H1 (cell line): ENCODE measurements at regions of chr3 and their contacts with region 1.

Region 1: GRCh38 chr3:50221411-50222168 is 14.4 kb upstream of the GNAI2 start:
- DNase-seq: peak in 1 of 2 experiments; percentile 70
- H3K4me3 ChIP-seq: no peak overlapping the region
- H3K27ac ChIP-seq: no peak overlapping the region
- H3K4me1 ChIP-seq: peaks cover 0 to 3% (median 1%) of the 10 kb centered on the region in 4 experiments; a peak in 5 of 7 replicates
- H3K27me3 ChIP-seq: peaks cover 0 to 2% (median 0%) of the 10 kb centered on the region in 4 experiments; a peak in 1 of 7 replicates
- CTCF ChIP-seq: peak in 2 of 3 experiments; percentile 77 to 91; a peak in 3 of 4 replicates
- EP300 ChIP-seq: no peak
- POLR2A ChIP-seq: no peak
- RAD21 ChIP-seq: peak; percentile 74 to 81

Region 2: GRCh38 chr3:50205414-50206276 is 15.9 kb before region 1 on chr3:
- CTCF ChIA-PET with region 1: interaction called, 587 read pairs
- POLR2A ChIA-PET with region 1: interaction called, 11 read pairs
- DNase-seq: peak in 1 of 2 experiments; percentile 89
- H3K4me3 ChIP-seq: peak overlapping the region; percentile 33 to 68 (median 58)
- H3K27ac ChIP-seq: no peak overlapping the region
- H3K4me1 ChIP-seq: peaks cover 0 to 25% (median 12%) of the 10 kb centered on the region in 4 experiments; a peak in 6 of 7 replicates
- H3K27me3 ChIP-seq: peaks cover 2 to 28% (median 21%) of the 10 kb centered on the region in 4 experiments
- CTCF ChIP-seq: no peak
- EP300 ChIP-seq: no peak
- POLR2A ChIP-seq: no peak
- RAD21 ChIP-seq: no peak